Heart right ventricle (tissue), 16 donors: ENCODE measurements at regions of chr15 and their contacts with region 1.

Region 1: DNA sequence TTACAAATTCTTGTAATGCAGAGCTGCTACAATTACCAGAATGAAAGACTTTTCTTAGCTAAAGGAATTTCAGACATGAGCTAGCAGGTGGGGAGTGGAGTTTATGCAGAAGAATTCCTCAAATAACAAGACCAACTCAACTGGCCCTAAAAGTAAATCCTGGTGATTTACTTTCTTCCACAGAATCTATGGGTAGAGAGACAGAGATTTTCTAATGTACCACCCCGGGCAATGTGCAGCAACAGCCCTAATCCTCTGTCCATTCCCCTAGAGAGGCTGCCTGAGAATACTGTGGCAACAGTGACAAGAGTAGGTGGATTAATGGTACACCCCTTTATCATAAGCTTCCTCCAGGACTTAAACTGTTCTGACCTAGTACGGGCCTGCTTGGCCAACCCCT is 55.2 kb downstream of the AQR start:
- DNase-seq: no peak
- ATAC-seq: no peak
- H3K4me3 ChIP-seq: no peak overlapping the region
- H3K27ac ChIP-seq: no peak overlapping the region
- H3K4me1 ChIP-seq: no peaks in the 10 kb centered on the region
- H3K27me3 ChIP-seq: no peaks in the 10 kb centered on the region
- CTCF ChIP-seq: no peak

Region 2: GRCh38 chr15:34621675-34622074 is 292.6 kb before region 1 on chr15:
- intact Hi-C with region 1: loop called in 3 of 10 experiments (anchors 5 to 10 kb)
- DNase-seq: no peak
- ATAC-seq: peak in 1 of 8 donors; percentile 50
- H3K4me3 ChIP-seq: no peak overlapping the region
- H3K27ac ChIP-seq: no peak overlapping the region
- H3K4me1 ChIP-seq: peaks cover 0 to 17% (median 6%) of the 10 kb centered on the region in 9 donors
- H3K27me3 ChIP-seq: peaks cover 0 to 7% (median 0%) of the 10 kb centered on the region in 7 donors
- CTCF ChIP-seq: peak; percentile 11 to 63 (median 40)

Region 3: DNA sequence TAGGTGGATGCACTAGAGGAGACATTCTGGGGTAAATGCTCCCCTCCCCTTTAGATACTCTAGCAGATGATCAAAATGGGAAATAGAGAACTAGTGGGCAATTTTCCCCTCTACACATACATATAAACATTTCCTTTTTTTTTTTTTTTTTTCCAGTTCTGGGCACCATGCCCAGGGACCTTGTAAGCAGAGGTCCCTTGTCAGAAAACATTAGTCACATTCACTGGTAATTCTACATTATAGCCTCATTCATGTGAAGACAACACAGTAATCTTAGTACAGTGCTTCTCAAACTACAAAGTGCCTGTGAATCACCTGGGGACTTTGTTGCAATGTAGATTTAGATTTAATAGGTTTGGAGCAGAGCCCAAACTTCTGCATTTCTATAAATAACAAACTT is 58.9 kb before region 1 on chr15:
- intact Hi-C with region 1: loop called in 1 of 10 experiments (anchors 10 kb)
- DNase-seq: no peak
- ATAC-seq: peak in 6 of 8 donors; percentile 15 to 65 (median 36)
- H3K4me3 ChIP-seq: no peak overlapping the region
- H3K27ac ChIP-seq: peak overlapping the region in 7 of 10 donors; percentile 5 to 50 (median 19)
- H3K4me1 ChIP-seq: peaks cover 0 to 42% (median 28%) of the 10 kb centered on the region in 9 donors
- H3K27me3 ChIP-seq: no peaks in the 10 kb centered on the region
- CTCF ChIP-seq: no peak

Region 4: DNA sequence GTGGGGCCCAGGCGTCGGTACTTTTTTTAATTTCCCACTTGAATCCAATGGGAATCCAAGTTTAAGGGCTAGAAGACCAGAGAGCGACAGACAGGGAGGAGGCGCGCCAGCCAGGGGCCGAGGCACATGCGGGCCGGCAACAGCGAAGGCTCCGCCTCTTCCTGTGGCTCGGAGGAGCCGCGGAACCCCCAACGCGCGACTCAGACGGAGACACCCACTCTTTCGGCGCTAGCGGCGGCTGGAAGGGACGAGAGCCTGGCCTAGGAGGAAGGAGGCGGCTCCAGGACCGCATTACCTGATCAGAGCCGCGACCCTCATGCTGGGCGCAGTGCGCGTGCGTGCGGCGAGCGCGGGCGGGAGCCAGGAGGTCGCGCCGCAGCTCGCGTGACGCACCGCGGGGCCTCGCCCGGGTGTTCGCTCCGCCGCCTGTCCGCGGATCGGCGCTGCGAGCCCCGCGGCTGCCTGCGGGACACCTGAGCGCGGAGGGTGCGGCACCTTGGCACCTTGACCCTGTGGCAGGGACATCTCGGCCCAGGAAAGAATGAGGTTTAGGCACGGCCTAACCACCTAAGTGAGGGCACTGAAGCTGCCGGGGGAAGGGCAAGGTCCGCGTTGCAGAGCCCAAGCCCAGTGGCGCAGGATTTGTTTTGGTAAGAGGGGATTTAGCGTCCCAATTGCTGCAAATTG is 631.6 kb after region 1 on chr15 and contains the start of gene DPH6:
- intact Hi-C with region 1: no loop called
- DNase-seq: peak; percentile 86 to 87
- ATAC-seq: peak; percentile 94 to 96 (median 96)
- H3K4me3 ChIP-seq: peak within 1 kb of the TSS; percentile 12 to 87 (median 70)
- H3K27ac ChIP-seq: peak within 1 kb of the TSS; percentile 96 to 100 (median 98)
- H3K4me1 ChIP-seq: peaks cover 0 to 40% (median 29%) of the 10 kb centered on the region in 9 donors
- H3K27me3 ChIP-seq: no peaks in the 10 kb centered on the region
- CTCF ChIP-seq: peak in 4 of 9 donors; percentile 12 to 37 (median 24)
- total RNA-seq, gene DPH6: 12.2 to 25.8 (median 23.4) TPM